Activated CD4-positive, alpha-beta T cell treated with anti-CD3 and anti-CD28 coated beads for 36 hours (primary cell): ENCODE measurements at regions of chr20 and their contacts with region 1.

Region 1: DNA sequence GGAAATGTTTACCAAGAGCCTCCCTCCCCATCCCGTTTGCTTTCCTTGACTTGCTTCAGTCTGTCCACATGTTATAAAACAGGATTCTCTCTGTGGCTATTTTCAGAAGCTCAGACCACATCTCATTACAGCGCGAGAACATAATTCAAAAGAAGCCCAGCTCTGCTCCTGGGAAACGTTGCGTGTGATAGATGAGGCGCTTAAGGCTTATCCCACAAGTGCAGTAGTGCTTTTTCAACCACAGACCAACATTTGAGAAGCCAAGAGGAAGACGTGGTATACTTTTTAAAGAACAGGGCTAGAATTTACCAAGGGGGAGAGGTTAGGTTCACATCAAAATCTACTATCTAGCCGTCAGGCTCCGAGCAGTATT is 239.5 kb downstream of the SLC24A3 start:
- DNase-seq: no peak
- ATAC-seq: no peak
- H3K4me3 Mint-ChIP-seq: no peak overlapping the region
- H3K27ac Mint-ChIP-seq: no peak overlapping the region
- H3K4me1 Mint-ChIP-seq: no peaks in the 10 kb centered on the region
- H3K27me3 Mint-ChIP-seq: no peaks in the 10 kb centered on the region

Region 2: GRCh38 chr20:19381947-19382346 is 70.0 kb before region 1 on chr20:
- CTCF ChIA-PET with region 1: no interaction called
- POLR2A ChIA-PET with region 1: no interaction called
- intact Hi-C with region 1: loop called in 1 of 2 experiments (anchors 1 kb)
- DNase-seq: no peak
- ATAC-seq: no peak
- H3K4me3 Mint-ChIP-seq: no peak overlapping the region
- H3K27ac Mint-ChIP-seq: no peak overlapping the region
- H3K4me1 Mint-ChIP-seq: no peaks in the 10 kb centered on the region
- H3K27me3 Mint-ChIP-seq: peaks cover 3% of the 10 kb centered on the region

Region 3: GRCh38 chr20:19571996-19572395 is 120.1 kb after region 1 on chr20:
- CTCF ChIA-PET with region 1: no interaction called
- POLR2A ChIA-PET with region 1: no interaction called
- intact Hi-C with region 1: no loop called
- DNase-seq: no peak
- ATAC-seq: no peak
- H3K4me3 Mint-ChIP-seq: no peak overlapping the region
- H3K27ac Mint-ChIP-seq: no peak overlapping the region
- H3K4me1 Mint-ChIP-seq: no peaks in the 10 kb centered on the region
- H3K27me3 Mint-ChIP-seq: no peaks in the 10 kb centered on the region